ENCODE measurements at regions of chr15 and their contacts with region 1.

Region 1: DNA sequence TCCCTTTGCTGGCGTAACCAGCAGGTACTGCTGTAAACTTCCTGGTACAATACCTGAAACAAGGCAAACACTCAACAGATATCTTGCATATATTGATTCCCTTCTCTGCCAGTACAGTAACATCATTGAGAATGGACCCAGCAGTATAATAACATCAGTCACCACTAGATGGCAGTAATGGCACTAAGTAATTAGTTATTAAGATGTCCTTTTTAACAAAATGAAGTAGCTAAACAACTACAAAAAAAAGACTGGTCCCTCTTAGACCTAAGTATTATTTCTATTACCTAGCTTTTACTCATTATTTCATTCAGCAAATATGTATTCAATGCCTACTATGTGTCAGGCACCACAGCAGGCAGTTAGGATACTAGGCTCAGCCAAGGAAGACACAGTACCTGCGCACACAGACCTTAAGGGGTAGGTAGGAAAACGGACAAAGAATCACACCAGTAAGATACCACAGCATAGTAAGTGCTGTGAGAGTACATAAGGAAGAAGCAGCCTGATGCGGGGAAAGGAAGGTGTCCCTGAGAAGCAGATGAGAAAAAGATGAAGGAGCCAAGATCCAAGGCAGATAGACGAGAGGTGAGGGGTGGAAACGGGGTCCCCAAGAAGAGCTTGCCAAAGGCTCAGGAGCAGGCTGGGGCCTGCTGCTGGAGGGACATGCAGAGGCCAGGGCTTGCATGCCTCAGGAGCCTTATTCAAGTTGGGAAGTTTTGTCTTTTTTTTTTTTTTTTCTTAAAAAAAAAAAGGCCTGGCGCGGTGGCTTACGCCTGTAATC is 102.8 kb upstream of the CHD2 start:
- DNase-seq: peak; percentile 77
- H3K4me3 ChIP-seq: no peak overlapping the region
- H3K27ac ChIP-seq: no peak overlapping the region
- H3K4me1 ChIP-seq: no peaks in the 10 kb centered on the region
- H3K27me3 ChIP-seq: no peaks in the 10 kb centered on the region
- CTCF ChIP-seq: peak; percentile 49 to 55
- POLR2A ChIP-seq: no peak

Region 2: GRCh38 chr15:92808978-92809879 is 11.9 kb after region 1 on chr15:
- CTCF ChIA-PET with region 1: interaction called, 37 read pairs
- POLR2A ChIA-PET with region 1: no interaction called
- dilution Hi-C with region 1: no loop called
- intact Hi-C with region 1: no loop called
- DNase-seq: peak; percentile 99
- H3K4me3 ChIP-seq: peak overlapping the region; percentile 32 to 51 (median 39)
- H3K27ac ChIP-seq: peak overlapping the region; percentile 88
- H3K4me1 ChIP-seq: peaks cover 16% of the 10 kb centered on the region
- H3K27me3 ChIP-seq: no peaks in the 10 kb centered on the region
- CTCF ChIP-seq: peak; percentile 85 to 100
- POLR2A ChIP-seq: peak; percentile 72

Region 3: DNA sequence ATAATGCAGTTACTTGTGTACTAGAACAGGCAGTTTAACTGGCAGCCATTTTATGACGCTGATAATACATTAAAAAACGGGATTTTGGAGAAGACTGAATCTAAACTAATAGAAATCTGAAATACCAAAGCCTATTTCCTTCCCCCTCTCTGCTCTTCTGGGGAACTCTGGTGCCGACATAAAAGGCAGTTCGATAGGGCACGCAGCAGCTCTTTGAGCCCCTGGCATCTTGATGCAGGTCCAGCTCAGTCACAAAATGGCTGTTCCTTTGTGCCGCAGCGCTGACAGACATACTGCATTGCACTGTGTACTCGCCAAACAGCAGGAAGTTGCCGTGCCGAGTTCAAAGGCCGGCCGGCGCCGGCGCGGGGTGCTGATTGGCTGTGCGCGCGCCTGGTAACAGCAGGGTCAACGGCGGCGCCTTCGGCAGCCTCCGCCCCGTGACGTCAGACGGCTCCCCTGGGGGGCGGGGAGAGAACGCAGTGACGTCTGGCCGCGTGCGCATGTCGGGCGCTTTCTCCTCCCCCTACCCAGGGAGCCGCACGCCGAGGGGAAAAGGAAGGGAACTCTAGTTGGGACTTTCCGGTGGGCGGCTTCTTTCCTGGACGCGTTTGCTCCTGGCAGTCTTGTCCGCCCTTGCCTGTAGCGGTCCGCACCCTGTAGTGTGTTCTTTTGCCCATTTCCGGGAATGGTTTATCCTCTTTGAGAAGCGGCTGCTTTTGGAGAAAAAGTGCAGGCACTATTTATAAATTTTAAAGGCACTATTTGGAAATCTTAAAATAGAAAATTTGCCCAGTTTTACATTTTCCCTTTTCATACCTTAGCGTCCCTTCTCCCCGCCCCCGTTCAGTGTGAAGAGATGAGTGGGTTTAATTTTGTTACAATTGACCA is 106.8 kb after region 1 on chr15:
- CTCF ChIA-PET with region 1: interaction called, 19 read pairs
- POLR2A ChIA-PET with region 1: interaction called, 7 read pairs
- dilution Hi-C with region 1: loop called (anchors 25 kb)
- intact Hi-C with region 1: no loop called
- DNase-seq: peak; percentile 99
- H3K4me3 ChIP-seq: peak overlapping the region; percentile 64 to 100 (median 97)
- H3K27ac ChIP-seq: peak overlapping the region; percentile 98
- H3K4me1 ChIP-seq: peaks cover 54% of the 10 kb centered on the region
- H3K27me3 ChIP-seq: no peaks in the 10 kb centered on the region
- CTCF ChIP-seq: no peak
- POLR2A ChIP-seq: peak; percentile 95

Region 4: DNA sequence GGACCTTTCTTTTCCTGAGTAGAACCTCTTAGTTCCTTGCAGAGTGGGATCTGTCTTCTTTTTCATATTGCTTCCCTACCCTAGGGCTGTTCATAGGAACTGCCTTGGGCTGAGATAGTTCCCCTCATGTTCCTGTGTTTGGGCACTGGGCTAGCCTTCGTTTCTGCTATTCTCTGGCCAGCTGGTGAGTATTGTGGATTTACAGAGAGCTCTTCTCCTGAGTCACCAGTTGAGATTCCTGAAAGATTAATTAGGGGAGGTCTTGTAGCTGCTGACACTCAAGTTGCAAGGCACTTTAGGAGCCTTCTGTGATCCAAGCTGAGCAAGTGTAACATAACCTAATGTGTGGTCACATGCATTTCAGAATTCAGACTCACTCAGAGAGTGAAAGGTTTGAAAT is 133.4 kb after region 1 on chr15:
- CTCF ChIA-PET with region 1: interaction called, 18 read pairs
- POLR2A ChIA-PET with region 1: interaction called, 3 read pairs
- dilution Hi-C with region 1: no loop called
- intact Hi-C with region 1: no loop called
- DNase-seq: no peak
- H3K4me3 ChIP-seq: no peak overlapping the region
- H3K27ac ChIP-seq: no peak overlapping the region
- H3K4me1 ChIP-seq: no peaks in the 10 kb centered on the region
- H3K27me3 ChIP-seq: no peaks in the 10 kb centered on the region
- CTCF ChIP-seq: no peak
- POLR2A ChIP-seq: no peak

Region 5: DNA sequence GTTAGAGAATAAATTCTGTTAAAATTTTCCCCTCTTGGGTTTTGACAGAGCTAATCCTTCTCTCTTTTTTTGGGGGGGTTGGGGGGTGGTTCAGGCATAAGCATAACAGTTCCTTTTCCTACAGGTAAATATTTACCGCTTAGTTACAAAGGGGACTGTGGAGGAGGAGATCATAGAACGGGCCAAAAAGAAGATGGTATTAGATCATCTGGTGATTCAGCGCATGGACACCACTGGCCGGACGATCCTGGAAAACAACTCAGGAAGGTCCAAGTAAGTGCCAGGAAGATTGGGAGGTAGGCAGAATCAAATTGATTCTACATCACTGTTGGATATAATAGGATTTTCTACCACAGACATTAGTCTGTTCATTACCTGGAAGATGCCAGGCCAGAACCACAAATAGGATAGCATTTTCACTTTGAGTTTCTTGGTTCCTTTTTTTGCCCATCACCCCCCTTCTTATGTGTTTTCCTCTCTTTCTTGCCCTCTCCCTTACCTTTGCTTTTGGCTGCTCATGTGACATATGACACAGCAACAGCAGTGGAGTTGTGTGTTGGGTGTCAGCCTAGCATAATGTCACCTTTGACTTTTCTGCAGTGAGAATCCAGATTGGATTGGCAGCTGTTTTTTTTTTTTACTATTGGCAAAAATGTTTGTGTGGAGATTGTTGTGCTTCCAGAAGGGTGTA is 181.8 kb after region 1 on chr15:
- CTCF ChIA-PET with region 1: interaction called, 12 read pairs
- POLR2A ChIA-PET with region 1: no interaction called
- dilution Hi-C with region 1: no loop called
- intact Hi-C with region 1: no loop called
- DNase-seq: no peak
- H3K4me3 ChIP-seq: no peak overlapping the region
- H3K27ac ChIP-seq: no peak overlapping the region
- H3K4me1 ChIP-seq: peaks cover 20% of the 10 kb centered on the region
- H3K27me3 ChIP-seq: no peaks in the 10 kb centered on the region
- CTCF ChIP-seq: no peak
- POLR2A ChIP-seq: no peak

Region 6: DNA sequence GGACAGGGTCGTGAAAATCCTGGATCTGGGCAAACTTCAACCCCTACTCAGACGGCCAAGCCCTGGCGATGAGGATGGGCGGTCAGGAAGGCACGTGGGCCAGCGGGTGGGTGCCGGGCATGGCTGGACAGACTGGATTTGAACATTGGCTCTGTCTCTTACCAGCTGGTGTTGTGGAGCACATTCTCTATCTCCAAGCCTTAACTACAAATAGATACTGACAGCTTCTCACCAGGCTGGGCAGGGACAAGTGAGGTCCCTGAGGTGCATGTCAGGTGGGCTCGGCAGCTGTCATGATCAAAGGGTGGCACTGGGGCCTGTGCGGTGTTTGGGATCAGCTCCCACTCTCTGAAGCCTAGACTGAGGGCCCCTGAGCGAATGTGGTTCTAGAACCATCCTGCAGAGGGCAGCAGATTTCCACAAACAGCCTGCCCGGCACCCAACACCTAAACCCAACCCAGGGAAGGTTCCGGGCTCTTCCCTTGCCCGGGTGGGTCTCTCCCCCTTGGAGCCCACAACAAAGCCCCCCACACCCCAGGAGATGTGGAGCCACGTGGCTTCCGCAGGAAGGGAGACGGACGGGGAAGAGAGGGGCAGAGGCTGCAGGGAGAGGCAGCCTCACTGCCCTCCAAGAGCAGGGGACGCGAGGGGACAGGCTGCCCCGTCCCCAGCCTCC is 233.2 kb after region 1 on chr15:
- CTCF ChIA-PET with region 1: interaction called, 32 read pairs
- POLR2A ChIA-PET with region 1: no interaction called
- dilution Hi-C with region 1: no loop called
- intact Hi-C with region 1: loop called (anchors 5 kb)
- DNase-seq: peak; percentile 64
- H3K4me3 ChIP-seq: no peak overlapping the region
- H3K27ac ChIP-seq: no peak overlapping the region
- H3K4me1 ChIP-seq: peaks cover 23% of the 10 kb centered on the region
- H3K27me3 ChIP-seq: no peaks in the 10 kb centered on the region
- CTCF ChIP-seq: peak; percentile 69 to 86
- POLR2A ChIP-seq: no peak

Region 7: DNA sequence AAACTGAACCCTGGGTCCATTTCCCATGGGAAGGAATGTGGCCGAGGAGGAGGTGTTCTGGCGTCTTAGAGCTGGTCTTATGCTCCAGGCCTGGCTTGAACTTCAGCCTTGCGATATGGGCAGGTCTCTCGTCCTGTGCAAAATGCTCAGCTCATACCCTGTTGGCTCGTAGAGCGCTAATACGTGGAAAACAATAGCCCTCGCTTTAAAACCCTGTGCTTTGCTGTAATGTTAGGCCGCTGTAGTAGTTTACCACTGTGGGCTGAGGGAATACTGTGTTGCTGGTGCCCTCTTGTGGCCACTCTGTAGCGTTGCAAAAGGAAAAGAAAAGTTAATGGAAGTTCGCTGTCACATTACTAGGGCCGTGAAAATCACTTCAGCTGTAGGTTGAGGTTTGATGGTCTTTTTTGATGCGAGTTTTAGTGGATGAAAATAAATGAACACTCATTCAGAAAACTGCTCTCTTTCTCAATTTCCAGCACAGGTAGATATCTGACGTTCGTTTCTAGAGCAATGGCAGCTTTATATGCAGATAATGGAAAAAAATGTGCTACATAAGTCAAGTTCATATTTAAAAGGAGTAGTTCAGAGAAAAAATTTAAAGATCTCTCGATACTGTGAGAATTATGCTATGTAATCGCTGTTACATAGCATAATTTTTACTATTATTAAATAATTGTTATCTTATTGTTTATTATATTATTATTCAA is 1526.9 kb after region 1 on chr15:
- CTCF ChIA-PET with region 1: interaction called, 30 read pairs
- POLR2A ChIA-PET with region 1: no interaction called
- dilution Hi-C with region 1: no loop called
- intact Hi-C with region 1: no loop called
- DNase-seq: peak; percentile 62
- H3K4me3 ChIP-seq: no peak overlapping the region
- H3K27ac ChIP-seq: no peak overlapping the region
- H3K4me1 ChIP-seq: no peaks in the 10 kb centered on the region
- H3K27me3 ChIP-seq: no peaks in the 10 kb centered on the region
- CTCF ChIP-seq: peak; percentile 79 to 84
- POLR2A ChIP-seq: no peak